ENCODE measurements at regions of chr5 and their contacts with region 1.

Region 1: DNA sequence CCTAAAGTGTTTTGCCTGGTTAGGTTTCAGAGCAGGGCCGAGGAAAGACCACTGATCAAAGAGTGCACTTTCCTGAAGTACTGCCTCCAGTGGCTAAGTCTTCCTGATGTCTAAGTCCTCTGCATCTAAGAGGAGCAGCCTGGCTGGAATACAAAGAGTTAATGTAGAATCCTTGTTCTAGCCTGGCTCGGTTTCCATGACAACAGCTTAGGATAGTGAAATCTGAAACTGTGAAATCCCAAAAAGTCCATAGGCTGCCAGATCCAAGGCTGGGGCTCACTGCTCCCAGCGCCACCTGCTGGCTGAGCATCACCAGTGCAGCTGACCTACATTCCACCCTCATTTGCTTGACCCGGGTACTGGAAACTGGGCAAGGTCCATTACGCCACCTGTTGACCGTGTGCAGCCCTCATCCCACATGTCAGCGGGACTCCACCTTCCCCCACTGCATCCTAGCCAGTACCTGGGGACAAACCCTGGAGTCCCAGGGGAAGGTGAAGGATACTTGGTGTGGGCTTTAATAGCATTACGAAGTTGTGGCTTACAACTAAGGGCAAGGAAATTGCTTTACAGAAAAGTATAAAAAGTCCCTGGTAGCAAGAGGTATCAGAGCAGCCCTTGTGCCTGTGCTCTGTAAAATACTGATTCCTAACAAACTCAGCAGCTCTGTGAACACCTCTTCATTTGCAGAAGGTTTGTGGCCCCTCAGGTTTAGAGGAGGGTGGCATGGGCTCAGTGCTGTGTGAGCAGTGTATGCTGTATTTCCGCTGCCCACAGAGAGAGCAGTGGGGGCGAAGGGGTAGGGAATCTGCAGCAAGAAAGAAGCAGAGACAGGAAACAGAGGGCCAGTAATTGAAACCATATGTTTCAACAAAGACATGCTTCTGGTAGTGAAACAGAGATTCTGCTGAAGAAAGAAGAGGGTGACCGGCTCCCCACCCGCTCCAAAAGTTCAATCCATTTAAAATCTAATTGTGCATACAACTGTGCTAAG is 36.0 kb downstream of the PCDHGC5 start:
- DNase-seq: peak; percentile 86 to 93 (median 91)
- ATAC-seq: peak; percentile 89 to 97 (median 94)
- H3K4me3 ChIP-seq: no peak overlapping the region
- H3K27ac ChIP-seq: peak overlapping the region; percentile 55 to 83 (median 79)
- H3K4me1 ChIP-seq: peaks cover 0 to 47% (median 16%) of the 10 kb centered on the region in 4 donors
- H3K27me3 ChIP-seq: no peaks in the 10 kb centered on the region
- CTCF ChIP-seq: peak; percentile 99 to 100 (median 100)
- POLR2A ChIP-seq: no peak

Region 2: GRCh38 chr5:141475625-141476131 is 49.2 kb before region 1 on chr5 and contains the start of gene PCDHGC3:
- intact Hi-C with region 1: loop called in 1 of 2 experiments (anchors 10 kb)
- DNase-seq: peak; percentile 87 to 90 (median 90)
- ATAC-seq: peak; percentile 98 to 99 (median 99)
- H3K4me3 ChIP-seq: peak within 1 kb of the TSS; percentile 55 to 67 (median 61)
- H3K27ac ChIP-seq: peak within 1 kb of the TSS; percentile 59 to 77 (median 73)
- H3K4me1 ChIP-seq: peaks cover 0 to 8% (median 2%) of the 10 kb centered on the region in 4 donors
- H3K27me3 ChIP-seq: peaks cover 0 to 4% of the 10 kb centered on the region in 2 donors
- CTCF ChIP-seq: peak; percentile 6 to 47 (median 32)
- POLR2A ChIP-seq: peak; percentile 59
- total RNA-seq, gene PCDHGC3: 6.1 to 10.6 (median 7.6) TPM

Region 3: DNA sequence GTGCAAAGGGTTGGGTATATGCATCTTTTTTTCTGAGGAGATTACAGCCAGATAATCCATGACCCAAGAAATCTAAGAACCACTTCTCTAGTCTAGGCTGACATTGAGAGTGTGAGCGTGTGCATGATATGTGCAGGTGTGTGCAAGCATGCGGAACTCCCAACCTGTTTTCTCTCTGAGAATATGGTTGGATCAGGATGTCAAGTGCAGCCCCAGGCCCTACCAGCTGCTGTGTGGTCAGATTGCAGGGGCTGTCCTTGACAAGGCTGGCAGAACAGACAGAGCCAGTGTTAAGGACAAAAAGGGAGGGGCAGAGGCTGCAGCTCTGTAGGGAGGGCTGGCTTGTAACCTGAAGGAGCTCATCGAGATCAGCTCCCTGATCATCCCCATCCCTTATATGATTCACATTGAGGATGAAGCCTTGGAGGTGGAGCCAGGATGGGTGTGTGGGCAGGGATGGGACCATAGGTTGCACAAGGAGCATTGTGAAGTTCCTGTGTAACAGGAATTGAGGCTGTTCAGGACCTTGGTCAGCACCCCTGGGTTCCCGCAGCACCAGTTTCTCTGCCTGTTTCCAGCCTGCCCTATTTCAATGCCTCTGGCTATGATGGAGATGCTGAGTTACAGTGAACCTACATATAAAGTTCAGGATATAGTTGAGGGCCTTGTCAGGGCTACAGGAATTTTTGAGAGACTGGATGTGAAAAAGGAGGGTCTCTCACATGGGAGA is 209.8 kb after region 1 on chr5:
- intact Hi-C with region 1: no loop called
- DNase-seq: peak in 1 of 3 donors; percentile 37
- ATAC-seq: peak; percentile 47 to 73 (median 64)
- H3K4me3 ChIP-seq: no peak overlapping the region
- H3K27ac ChIP-seq: no peak overlapping the region
- H3K4me1 ChIP-seq: no peaks in the 10 kb centered on the region
- H3K27me3 ChIP-seq: no peaks in the 10 kb centered on the region
- CTCF ChIP-seq: no peak
- POLR2A ChIP-seq: no peak